Psoas muscle (tissue), 8 donors: ENCODE measurements at regions of chr19 and their contacts with region 1.

Region 1: GRCh38 chr19:35739275-35740107 is 2.8 kb downstream of the IGFLR1 start:
- DNase-seq: no peak
- ATAC-seq: no peak
- H3K4me3 ChIP-seq: peak overlapping the region; percentile 71
- H3K27ac ChIP-seq: peak overlapping the region; percentile 69
- H3K4me1 ChIP-seq: peaks cover 19% of the 10 kb centered on the region
- H3K27me3 ChIP-seq: no peaks in the 10 kb centered on the region
- CTCF ChIP-seq: no peak

Region 2: GRCh38 chr19:35458731-35459391 is 280.6 kb before region 1 on chr19:
- intact Hi-C with region 1: no loop called
- DNase-seq: peak in 1 of 2 donors; percentile 12
- ATAC-seq: no peak
- H3K4me3 ChIP-seq: no peak overlapping the region
- H3K27ac ChIP-seq: no peak overlapping the region
- H3K4me1 ChIP-seq: peaks cover 5% of the 10 kb centered on the region
- H3K27me3 ChIP-seq: peaks cover 0 to 2% (median 0%) of the 10 kb centered on the region in 3 donors
- CTCF ChIP-seq: no peak

Region 3: DNA sequence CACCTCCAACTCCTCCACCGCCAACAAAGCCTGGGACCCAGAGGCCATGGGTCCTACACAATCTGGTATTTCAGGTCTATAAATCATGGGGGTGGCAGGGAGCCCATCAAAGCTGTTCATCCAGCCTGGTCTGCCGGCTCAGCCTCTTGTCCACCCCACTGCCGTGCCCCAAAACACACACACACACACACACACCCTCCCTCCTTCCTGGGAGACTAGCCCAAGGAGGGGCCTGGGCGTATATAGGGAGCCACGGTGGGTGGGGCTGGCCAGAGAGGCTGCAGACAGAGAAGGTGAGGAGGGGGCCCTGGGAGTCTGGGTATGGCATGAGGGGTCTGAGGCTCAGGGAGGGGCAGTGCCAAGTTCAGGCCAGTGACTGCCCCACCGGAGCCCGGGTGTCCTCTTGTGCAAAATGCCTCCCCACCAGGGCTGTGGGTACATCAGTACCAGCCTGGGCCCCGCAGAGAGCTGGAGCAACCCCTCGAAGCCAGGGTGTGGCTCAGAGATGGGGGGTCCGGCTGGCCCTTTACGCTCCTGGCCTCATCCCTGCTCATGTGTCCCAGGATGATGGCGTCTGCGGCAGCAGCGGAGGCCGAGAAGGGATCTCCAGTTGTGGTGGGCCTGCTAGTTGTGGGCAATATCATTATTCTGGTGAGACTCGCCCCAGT is 73.1 kb before region 1 on chr19 and contains the start of gene UPK1A:
- intact Hi-C with region 1: no loop called
- DNase-seq: no peak
- ATAC-seq: peak in 2 of 4 donors; percentile 15 to 41
- H3K4me3 ChIP-seq: no peak within 1 kb of the TSS
- H3K27ac ChIP-seq: no peak within 1 kb of the TSS
- H3K4me1 ChIP-seq: no peaks in the 10 kb centered on the region
- H3K27me3 ChIP-seq: no peaks in the 10 kb centered on the region
- CTCF ChIP-seq: no peak
- total RNA-seq, gene UPK1A: not detected

Region 4: GRCh38 chr19:35725216-35725867 is 14.1 kb before region 1 on chr19:
- intact Hi-C with region 1: loop called in 1 of 2 experiments (anchors 2 kb)
- DNase-seq: no peak
- ATAC-seq: no peak
- H3K4me3 ChIP-seq: no peak overlapping the region
- H3K27ac ChIP-seq: no peak overlapping the region
- H3K4me1 ChIP-seq: no peaks in the 10 kb centered on the region
- H3K27me3 ChIP-seq: no peaks in the 10 kb centered on the region
- CTCF ChIP-seq: no peak

Region 5: DNA sequence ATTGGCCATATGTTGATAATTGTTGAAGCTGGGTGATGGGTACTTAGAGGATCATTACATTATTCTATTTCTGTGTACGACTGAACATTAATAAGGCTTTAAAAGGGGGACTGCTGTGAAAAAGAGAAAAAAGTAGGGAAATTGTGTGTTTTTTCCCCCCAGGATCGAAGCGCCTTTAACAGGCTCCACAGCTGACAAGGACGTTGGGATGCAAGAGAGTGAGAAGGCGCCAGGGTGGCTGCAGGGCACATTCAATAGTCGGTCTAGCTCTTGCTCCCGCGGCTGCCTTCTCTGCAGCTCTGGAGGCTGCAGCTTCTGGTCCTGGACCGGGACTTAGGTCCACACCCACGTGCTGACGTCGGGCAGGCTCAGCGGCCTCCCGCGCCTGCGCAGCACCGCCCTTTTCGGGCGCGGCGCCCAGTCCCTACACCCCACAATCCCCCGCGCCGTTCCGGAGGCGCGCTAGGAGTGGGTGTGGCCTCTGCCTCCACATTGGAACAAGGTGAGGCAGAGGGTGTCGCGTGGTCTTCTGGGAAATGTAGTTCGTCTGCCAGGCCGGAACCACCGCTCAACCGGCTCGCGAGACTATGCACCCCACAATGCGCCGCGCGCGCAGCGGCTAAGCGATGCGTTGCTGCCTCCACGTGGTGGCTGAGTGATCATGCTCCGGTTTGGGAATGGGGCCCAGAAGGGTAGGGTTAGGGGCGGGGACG is 191.8 kb after region 1 on chr19:
- intact Hi-C with region 1: no loop called
- DNase-seq: peak; percentile 99 to 100
- ATAC-seq: peak; percentile 98 to 100 (median 99)
- H3K4me3 ChIP-seq: peak overlapping the region; percentile 54
- H3K27ac ChIP-seq: peak overlapping the region; percentile 62
- H3K4me1 ChIP-seq: peaks cover 13% of the 10 kb centered on the region
- H3K27me3 ChIP-seq: no peaks in the 10 kb centered on the region
- CTCF ChIP-seq: peak; percentile 66